Activated B cell treated with CpG ODN at 0.5 μM for 24 hours (primary cell): ENCODE measurements at regions of chr2 and their contacts with region 1.

Region 1: GRCh38 chr2:37059841-37060240 is 24.3 kb downstream of the HEATR5B start:
- DNase-seq: no peak
- ATAC-seq: no peak
- H3K4me3 Mint-ChIP-seq: no peak overlapping the region
- H3K27ac Mint-ChIP-seq: no peak overlapping the region
- H3K4me1 Mint-ChIP-seq: no peaks in the 10 kb centered on the region
- H3K27me3 Mint-ChIP-seq: no peaks in the 10 kb centered on the region
- CTCF ChIP-seq: no peak

Region 2: DNA sequence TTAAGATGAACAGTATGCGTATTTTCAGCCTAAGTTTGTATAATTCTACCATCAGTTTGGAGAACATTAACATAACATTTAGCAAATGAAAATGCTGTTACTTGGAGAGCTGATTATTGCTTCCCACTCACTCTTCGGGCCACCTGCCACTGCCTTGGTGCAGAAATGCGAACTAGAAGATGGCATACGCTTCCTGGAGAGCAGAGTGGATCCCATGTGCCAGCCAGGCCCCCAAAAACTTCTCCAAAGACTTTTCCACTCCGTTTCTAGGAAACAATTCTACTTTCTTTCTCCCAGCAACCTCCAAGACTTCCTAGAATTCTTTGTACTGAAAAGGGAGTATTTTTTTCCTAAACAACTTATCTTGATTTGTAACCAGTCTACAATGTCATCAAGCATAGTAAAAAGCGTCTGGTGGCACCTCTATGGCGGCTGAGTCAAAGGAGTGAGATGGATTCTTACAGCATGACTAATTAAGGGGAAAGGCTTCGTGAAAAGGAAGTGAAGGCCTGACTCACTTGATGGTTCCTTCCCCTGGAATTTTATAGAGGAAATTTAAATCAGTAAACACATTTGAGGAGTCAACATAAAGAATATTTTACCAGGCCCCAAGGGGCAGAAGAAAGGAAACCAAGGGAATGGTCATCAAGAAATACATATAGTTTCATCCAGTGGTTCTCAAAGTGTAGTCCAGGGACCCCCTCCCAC is 498.4 kb before region 1 on chr2:
- CTCF ChIA-PET with region 1: no interaction called
- POLR2A ChIA-PET with region 1: no interaction called
- intact Hi-C with region 1: no loop called
- DNase-seq: no peak
- ATAC-seq: no peak
- H3K4me3 Mint-ChIP-seq: no peak overlapping the region
- H3K27ac Mint-ChIP-seq: no peak overlapping the region
- H3K4me1 Mint-ChIP-seq: no peaks in the 10 kb centered on the region
- H3K27me3 Mint-ChIP-seq: no peaks in the 10 kb centered on the region
- CTCF ChIP-seq: no peak

Region 3: DNA sequence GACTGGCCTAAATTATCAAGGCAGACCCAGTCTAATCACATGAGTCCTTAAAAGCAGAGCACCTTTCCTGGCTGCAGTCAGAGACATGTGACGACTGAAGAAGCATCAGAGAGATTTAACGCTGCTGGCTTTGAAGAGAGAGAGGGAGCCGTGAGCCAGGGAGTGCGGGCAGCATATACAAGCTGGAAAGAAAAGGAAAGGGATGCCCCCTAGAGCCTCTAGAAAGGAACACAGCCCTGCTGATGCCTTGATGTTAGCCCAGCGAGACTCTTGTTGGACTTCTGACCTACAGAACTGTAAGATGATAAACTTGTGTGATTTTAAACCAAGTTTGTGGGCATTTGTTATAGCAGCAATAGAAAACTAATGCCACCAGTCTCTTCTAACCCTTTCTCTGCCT is 33.8 kb before region 1 on chr2:
- CTCF ChIA-PET with region 1: no interaction called
- POLR2A ChIA-PET with region 1: no interaction called
- intact Hi-C with region 1: loop called (anchors 5 kb)
- DNase-seq: no peak
- ATAC-seq: no peak
- H3K4me3 Mint-ChIP-seq: no peak overlapping the region
- H3K27ac Mint-ChIP-seq: no peak overlapping the region
- H3K4me1 Mint-ChIP-seq: no peaks in the 10 kb centered on the region
- H3K27me3 Mint-ChIP-seq: no peaks in the 10 kb centered on the region
- CTCF ChIP-seq: no peak